ENCODE measurements at regions of chr17 and their contacts with region 1.

Region 1: DNA sequence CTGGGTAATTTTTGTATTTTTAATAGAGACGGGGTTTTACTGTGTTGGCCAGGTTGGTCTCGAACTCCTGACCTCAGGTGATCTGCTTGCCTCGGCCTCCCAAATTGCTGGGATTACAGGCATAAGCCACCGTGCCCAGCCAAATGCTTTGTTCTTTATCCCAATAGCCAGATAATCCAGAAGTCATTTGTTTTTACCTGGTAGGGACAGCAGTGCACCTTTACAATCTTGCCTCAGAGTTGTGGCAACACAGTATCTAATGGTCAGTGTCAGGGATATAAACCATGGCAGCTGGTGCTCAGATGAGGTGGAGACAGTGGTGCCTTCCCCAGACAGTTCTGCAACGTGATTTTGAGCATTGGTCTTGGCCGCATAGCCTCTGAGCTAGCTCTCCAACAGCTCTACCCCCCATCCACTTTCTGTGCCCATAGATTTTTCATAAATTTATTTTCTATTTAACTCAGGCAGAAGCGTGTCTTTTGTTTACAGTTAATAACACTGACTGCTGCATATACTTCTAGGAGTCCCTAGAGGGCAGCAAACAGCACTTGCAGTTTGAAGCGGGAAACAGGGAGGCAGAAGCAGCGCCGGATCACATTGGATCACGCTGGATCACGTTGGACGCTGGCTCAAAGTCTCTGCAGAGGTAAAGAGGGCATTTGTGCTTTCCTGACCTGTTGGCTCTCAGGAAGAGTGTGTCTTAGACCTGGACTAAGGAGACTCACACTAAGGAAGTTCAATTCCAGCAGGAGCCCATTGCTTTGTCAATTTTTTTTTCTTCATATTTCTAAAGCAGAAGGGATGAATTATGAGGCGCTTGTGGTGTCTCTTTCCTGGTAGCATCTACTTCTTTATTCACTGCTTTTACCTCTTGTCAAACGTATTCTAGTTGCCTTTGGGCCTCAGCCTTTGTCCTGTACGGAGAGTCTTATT is 5.1 kb upstream of the GGT6 start:
- DNase-seq: peak; percentile 38
- H3K4me3 ChIP-seq: no peak overlapping the region
- H3K27ac ChIP-seq: no peak overlapping the region
- H3K27me3 ChIP-seq: peaks cover 17% of the 10 kb centered on the region
- CTCF ChIP-seq: peak; percentile 93

Region 2: GRCh38 chr17:4420692-4421131 is 144.8 kb before region 1 on chr17:
- CTCF ChIA-PET with region 1: interaction called, 20 read pairs
- POLR2A ChIA-PET with region 1: no interaction called
- DNase-seq: peak; percentile 36
- H3K4me3 ChIP-seq: no peak overlapping the region
- H3K27ac ChIP-seq: no peak overlapping the region
- H3K27me3 ChIP-seq: no peaks in the 10 kb centered on the region
- CTCF ChIP-seq: peak; percentile 85

Region 3: GRCh38 chr17:4576729-4577322 is 11.4 kb after region 1 on chr17:
- CTCF ChIA-PET with region 1: interaction called, 25 read pairs
- POLR2A ChIA-PET with region 1: no interaction called
- DNase-seq: no peak
- H3K4me3 ChIP-seq: no peak overlapping the region
- H3K27ac ChIP-seq: no peak overlapping the region
- H3K27me3 ChIP-seq: peaks cover 40% of the 10 kb centered on the region
- CTCF ChIP-seq: no peak

Region 4: DNA sequence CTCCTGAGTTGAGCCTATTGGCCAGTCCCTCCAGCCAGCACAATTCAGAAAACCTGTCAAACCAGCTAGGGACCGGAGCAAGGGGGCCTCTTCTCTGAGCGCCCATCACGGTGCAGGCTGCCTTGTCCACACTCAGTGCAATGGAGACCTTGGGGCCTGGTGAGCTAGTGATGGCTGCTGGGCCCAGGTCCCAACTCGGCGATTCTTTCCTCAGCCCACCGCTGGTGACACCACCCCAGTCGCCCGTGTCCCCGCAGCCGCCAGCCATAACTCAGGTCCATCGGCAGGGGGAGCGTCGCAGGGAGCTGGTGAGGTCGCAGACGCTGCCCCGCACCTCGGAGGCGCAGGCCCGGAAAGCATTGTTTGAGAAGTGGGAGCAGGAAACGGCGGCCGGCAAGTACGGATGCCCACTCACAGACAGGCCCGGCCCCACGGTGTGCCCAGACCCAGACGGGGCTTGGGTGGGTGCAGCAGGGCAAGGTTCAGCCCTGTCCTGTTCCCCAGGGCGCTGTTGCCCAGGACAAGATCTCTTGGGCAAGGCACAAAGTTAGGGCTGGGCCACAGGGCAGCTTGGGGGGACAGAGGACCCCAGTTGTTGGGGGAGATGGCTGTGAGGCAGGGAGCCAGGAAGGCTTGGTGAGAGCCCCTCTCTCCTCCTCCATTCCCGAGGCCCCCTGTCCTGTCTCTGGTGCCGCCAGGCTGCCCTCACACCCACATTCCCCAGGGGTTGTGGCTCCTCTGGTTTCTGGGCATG is 29.6 kb after region 1 on chr17:
- CTCF ChIA-PET with region 1: interaction called, 21 read pairs
- POLR2A ChIA-PET with region 1: no interaction called
- DNase-seq: no peak
- H3K4me3 ChIP-seq: no peak overlapping the region
- H3K27ac ChIP-seq: no peak overlapping the region
- H3K27me3 ChIP-seq: peaks cover 54% of the 10 kb centered on the region
- CTCF ChIP-seq: peak; percentile 15; the same call in 1 of the 2 replicates

Region 5: DNA sequence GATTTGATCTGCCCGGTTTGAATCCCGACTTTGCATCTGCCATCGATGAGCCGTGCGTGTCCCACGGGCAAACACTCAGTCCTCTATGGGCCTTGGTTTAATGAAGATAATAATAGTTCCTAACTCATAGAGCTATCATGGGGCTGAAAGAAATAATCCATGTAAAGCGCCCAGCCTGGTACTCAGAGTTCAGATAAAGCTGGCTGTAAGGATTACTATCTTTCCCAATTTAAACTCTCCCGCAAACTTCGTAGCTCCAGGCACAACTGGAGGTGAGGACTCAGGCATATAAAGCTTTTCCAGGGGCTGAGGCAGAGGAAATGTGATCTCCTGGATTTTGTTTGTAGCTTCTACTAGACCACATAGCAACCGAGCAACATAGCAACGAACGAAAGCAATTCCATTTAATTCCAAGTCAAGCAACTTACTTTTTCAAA is 59.7 kb after region 1 on chr17:
- CTCF ChIA-PET with region 1: interaction called, 295 read pairs
- POLR2A ChIA-PET with region 1: interaction called, 5 read pairs
- DNase-seq: no peak
- H3K4me3 ChIP-seq: no peak overlapping the region
- H3K27ac ChIP-seq: no peak overlapping the region
- H3K27me3 ChIP-seq: peaks cover 9% of the 10 kb centered on the region
- CTCF ChIP-seq: no peak

Region 6: DNA sequence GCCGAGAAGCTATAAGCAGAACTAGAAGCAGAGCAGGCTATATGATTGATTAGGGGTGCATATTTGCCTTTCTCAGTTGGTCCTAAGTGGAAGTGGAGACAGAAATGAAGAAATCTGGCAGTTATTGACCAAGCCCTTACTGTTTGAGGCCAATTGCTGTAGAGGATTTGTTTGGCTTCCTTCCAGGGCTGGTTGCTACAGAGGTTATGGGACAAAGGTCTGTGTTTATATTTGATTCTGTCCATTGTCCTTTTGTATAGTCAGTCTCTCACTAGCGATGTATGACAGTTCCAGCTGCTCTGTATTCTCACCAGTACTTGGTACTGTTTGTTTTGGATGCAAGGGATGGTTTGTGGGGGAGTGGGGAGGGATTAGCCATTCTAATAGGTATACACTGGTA is 83.3 kb after region 1 on chr17:
- CTCF ChIA-PET with region 1: interaction called, 14 read pairs
- POLR2A ChIA-PET with region 1: no interaction called
- DNase-seq: no peak
- H3K4me3 ChIP-seq: no peak overlapping the region
- H3K27ac ChIP-seq: no peak overlapping the region
- H3K27me3 ChIP-seq: peaks cover 10% of the 10 kb centered on the region
- CTCF ChIP-seq: no peak

Region 7: GRCh38 chr17:4693443-4693842 is 128.0 kb after region 1 on chr17:
- CTCF ChIA-PET with region 1: no interaction called
- POLR2A ChIA-PET with region 1: no interaction called
- DNase-seq: no peak
- H3K4me3 ChIP-seq: no peak overlapping the region
- H3K27ac ChIP-seq: no peak overlapping the region
- H3K27me3 ChIP-seq: no peaks in the 10 kb centered on the region
- CTCF ChIP-seq: no peak